ENCODE measurements at regions of chr5 and their contacts with region 1.

Region 1: GRCh38 chr5:73454351-73455036 is 5.9 kb upstream of the FOXD1 start:
- DNase-seq: peak; percentile 34 to 46
- ATAC-seq: peak; percentile 80

Region 2: GRCh38 chr5:73215891-73216610 is 238.4 kb before region 1 on chr5:
- intact Hi-C with region 1: loop called in 1 of 2 experiments (anchors 2 kb)
- DNase-seq: peak; percentile 66 to 87
- ATAC-seq: peak; percentile 94

Region 3: GRCh38 chr5:73233347-73234200 is 220.9 kb before region 1 on chr5:
- intact Hi-C with region 1: no loop called
- DNase-seq: no peak
- ATAC-seq: peak; percentile 53

Region 4: DNA sequence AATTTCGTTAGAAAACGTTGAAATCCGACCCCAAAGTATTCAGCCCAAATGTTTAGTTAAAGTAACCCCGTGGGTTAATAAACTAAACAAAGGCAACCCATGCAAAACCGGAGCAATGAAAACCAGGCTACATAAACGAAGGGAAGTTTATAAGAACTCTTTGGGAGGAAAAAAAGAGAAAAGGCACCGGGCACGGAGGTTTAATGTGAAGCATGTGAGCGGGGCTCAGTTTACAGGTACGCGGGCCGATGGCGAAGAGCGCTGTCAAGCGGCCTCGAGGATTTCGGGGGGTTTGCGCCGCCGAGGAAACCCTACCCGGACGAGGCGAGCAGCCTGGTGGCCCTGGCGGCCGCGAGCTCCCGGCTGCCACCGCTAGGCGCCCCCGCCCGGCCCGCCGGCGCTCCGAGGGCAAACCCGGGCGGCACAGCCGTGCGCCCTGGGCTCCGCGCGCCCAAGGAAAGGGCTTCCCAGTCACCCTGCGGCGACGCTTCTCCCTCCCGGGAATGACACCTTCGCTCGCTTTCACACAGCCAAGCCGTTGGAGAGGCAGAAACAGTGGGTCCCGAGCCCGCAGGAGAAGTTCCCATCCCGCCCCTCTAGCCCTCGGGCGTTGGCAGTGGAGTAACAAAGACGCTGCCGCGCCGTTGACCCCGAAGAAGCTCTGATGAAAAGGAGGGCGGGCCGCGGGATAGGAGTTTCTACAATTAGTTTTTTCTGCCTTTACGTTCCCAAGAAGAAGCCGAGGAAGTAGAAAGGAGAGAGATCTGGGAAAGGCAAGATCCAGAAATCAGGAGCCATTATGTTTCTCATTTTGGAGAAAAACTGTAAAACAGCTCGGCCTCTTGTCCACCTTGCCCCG is 155.5 kb before region 1 on chr5:
- intact Hi-C with region 1: loop called in 1 of 2 experiments (anchors 5 kb)
- DNase-seq: peak in 1 of 2 donors; percentile 22
- ATAC-seq: peak; percentile 75

Region 5: GRCh38 chr5:73498057-73499008 is 43.8 kb after region 1 on chr5 and contains the start of gene BTF3:
- intact Hi-C with region 1: no loop called
- DNase-seq: peak; percentile 95 to 96
- ATAC-seq: peak; percentile 87
- total RNA-seq, gene BTF3: 522 to 537 TPM

Region 6: GRCh38 chr5:73783828-73784227 is 329.3 kb after region 1 on chr5:
- intact Hi-C with region 1: no loop called
- DNase-seq: no peak
- ATAC-seq: no peak

Measured in left colon (tissue), 2 donors.